Endothelial cell of umbilical vein (primary cell): ENCODE measurements at regions of chr16 and their contacts with region 1.

Region 1: DNA sequence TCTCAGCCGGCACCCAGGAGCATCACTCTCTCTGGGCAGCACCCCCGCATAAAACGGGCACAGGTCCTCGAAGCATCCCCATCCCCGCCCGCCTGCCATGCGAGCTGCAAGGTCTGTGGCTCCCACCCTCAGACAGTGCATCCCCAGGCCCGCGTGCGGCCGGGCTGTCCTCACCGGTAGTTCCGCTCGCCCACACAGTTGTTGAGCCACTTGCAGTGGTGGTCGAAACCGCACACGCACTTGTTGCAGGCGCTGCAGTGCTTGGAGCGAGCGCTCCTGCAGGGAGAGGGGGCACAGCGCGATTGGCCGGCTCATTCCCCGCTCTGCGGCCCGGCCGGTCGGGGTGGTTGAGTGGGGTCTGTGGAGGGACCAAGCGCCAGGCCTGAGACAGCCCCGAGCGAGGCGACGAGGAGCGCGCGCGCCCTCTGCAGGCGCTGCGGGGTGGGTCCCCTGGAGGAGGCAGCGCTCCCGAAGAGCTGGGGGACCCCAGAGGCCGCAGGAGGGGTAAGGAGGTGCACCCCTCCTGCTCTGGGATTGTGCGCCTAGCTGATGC is 6.0 kb upstream of the TPPP3 start:
- DNase-seq: peak; percentile 47
- H3K4me3 ChIP-seq: no peak overlapping the region
- H3K27ac ChIP-seq: no peak overlapping the region
- H3K4me1 ChIP-seq: peaks cover 1% of the 10 kb centered on the region
- H3K27me3 ChIP-seq: peaks cover 5 to 6% of the 10 kb centered on the region in 2 experiments
- CTCF ChIP-seq: peak; percentile 88 to 96
- POLR2A ChIP-seq: no peak

Region 2: GRCh38 chr16:66844342-66845079 is 554.7 kb before region 1 on chr16 and contains the start of gene CA7:
- CTCF ChIA-PET with region 1: no interaction called
- POLR2A ChIA-PET with region 1: no interaction called
- dilution Hi-C with region 1: no loop called
- intact Hi-C with region 1: no loop called
- DNase-seq: no peak
- H3K4me3 ChIP-seq: peak within 1 kb of the TSS in 1 of 3 experiments; percentile 1
- H3K27ac ChIP-seq: no peak within 1 kb of the TSS
- H3K4me1 ChIP-seq: peaks cover 2% of the 10 kb centered on the region
- H3K27me3 ChIP-seq: peaks cover 46 to 50% of the 10 kb centered on the region in 2 experiments
- CTCF ChIP-seq: no peak
- POLR2A ChIP-seq: no peak
- total RNA-seq, gene CA7: not detected in 2 replicates

Region 3: DNA sequence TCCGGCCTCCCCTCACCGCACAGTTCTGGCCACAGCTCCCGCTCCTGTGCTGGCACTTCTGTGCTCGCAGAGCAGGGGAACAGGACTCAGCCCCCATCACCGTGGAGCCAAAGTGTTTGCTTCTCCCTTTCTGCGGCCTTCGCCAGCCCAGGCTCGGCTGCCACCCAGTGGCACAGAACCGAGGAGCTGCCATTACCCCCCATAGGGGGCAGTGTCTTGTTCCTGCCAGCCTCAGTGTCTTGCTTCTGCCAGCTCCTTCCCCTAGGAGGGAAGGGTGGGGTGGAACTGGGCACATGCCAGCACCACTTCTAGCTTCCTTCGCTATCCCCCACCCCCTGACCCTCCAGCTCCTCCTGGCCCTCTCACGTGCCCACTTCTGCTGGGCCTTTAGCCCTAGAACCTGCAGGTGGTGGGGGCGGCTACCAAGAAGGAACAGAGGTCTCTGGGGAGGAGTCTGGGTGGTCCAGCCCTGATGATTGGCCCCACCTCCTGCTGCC is 201.0 kb before region 1 on chr16:
- CTCF ChIA-PET with region 1: interaction called, 10 read pairs
- POLR2A ChIA-PET with region 1: no interaction called
- dilution Hi-C with region 1: no loop called
- intact Hi-C with region 1: loop called (anchors 10 kb)
- DNase-seq: peak; percentile 63
- H3K4me3 ChIP-seq: no peak overlapping the region
- H3K27ac ChIP-seq: no peak overlapping the region
- H3K4me1 ChIP-seq: peaks cover 12% of the 10 kb centered on the region
- H3K27me3 ChIP-seq: no peaks in the 10 kb centered on the region
- CTCF ChIP-seq: peak; percentile 92 to 96
- POLR2A ChIP-seq: no peak

Region 4: GRCh38 chr16:67279296-67280089 is 119.8 kb before region 1 on chr16 and contains the start of gene PLEKHG4:
- CTCF ChIA-PET with region 1: interaction called, 26 read pairs
- POLR2A ChIA-PET with region 1: no interaction called
- dilution Hi-C with region 1: no loop called
- intact Hi-C with region 1: no loop called
- DNase-seq: peak; percentile 71
- H3K4me3 ChIP-seq: peak within 1 kb of the TSS; percentile 16 to 60 (median 51)
- H3K27ac ChIP-seq: peak within 1 kb of the TSS; percentile 78
- H3K4me1 ChIP-seq: peaks cover 21% of the 10 kb centered on the region
- H3K27me3 ChIP-seq: no peaks in the 10 kb centered on the region
- CTCF ChIP-seq: peak; percentile 73
- POLR2A ChIP-seq: no peak
- total RNA-seq, gene PLEKHG4: 23.9 and 26.6 TPM in 2 replicates

Region 5: DNA sequence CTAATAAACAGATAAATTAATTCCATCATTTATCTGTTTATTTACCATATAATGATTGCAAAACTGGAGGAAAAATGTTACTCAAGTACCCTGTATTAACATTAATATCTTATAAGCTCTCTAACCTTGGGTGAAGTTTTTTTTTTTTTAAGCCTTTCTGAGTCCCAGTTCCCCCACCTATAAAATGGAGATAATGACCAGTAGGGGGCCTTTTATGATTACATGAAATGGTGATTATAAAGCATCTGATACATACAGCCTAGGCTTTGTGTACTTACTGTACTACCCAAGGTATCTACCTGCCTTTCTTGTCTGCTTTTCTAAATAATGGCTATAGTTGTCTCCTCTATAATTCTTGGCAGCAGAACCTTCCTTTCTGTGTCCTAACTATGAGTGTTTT is 50.1 kb before region 1 on chr16:
- CTCF ChIA-PET with region 1: interaction called, 22 read pairs
- POLR2A ChIA-PET with region 1: no interaction called
- dilution Hi-C with region 1: no loop called
- intact Hi-C with region 1: no loop called
- DNase-seq: peak; percentile 59
- H3K4me3 ChIP-seq: no peak overlapping the region
- H3K27ac ChIP-seq: no peak overlapping the region
- H3K4me1 ChIP-seq: peaks cover 23% of the 10 kb centered on the region
- H3K27me3 ChIP-seq: no peaks in the 10 kb centered on the region
- CTCF ChIP-seq: peak; percentile 32 to 49
- POLR2A ChIP-seq: no peak

Region 6: DNA sequence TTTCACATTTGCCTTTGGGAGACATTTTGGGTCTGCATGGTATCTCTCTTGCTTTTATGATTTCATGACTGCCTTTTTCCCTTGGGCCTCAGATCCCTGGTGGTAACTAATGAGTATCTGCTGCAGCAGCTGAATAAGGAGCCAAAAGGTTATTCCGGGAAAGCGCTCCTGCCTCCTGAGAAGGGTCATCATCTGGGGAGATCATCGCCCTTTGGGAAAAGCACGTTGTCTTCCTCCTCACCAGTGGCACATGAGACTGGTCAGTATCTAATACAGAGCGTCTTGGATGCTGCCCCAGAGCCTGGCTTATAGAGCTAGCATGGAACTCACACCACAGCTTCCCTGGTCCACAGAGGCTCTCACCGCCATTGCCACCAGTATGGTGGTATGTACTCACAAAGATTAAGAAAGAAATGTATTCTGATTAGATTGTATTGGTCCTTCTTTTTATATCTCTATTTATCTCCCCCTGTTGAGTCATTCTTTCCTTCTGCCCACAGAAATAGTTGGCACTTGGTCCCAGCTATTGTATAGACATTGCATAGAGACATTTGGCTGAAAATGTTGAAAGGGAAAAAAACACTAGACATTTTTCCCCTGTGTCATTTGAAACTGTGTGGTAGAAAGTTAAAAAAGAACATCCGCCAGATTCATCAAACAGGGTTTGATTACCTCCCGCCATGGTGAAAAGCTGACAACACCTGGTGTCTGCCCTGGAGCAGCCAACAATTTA is 14.3 kb before region 1 on chr16:
- CTCF ChIA-PET with region 1: interaction called, 33 read pairs
- POLR2A ChIA-PET with region 1: no interaction called
- dilution Hi-C with region 1: no loop called
- intact Hi-C with region 1: no loop called
- DNase-seq: peak; percentile 85
- H3K4me3 ChIP-seq: no peak overlapping the region
- H3K27ac ChIP-seq: peak overlapping the region; percentile 13
- H3K4me1 ChIP-seq: peaks cover 13% of the 10 kb centered on the region
- H3K27me3 ChIP-seq: no peaks in the 10 kb centered on the region
- CTCF ChIP-seq: no peak
- POLR2A ChIP-seq: no peak

Region 7: GRCh38 chr16:67800338-67800926 is 401.2 kb after region 1 on chr16:
- CTCF ChIA-PET with region 1: no interaction called
- POLR2A ChIA-PET with region 1: no interaction called
- dilution Hi-C with region 1: no loop called
- intact Hi-C with region 1: no loop called
- DNase-seq: no peak
- H3K4me3 ChIP-seq: no peak overlapping the region
- H3K27ac ChIP-seq: no peak overlapping the region
- H3K4me1 ChIP-seq: peaks cover 8% of the 10 kb centered on the region
- H3K27me3 ChIP-seq: no peaks in the 10 kb centered on the region
- CTCF ChIP-seq: no peak
- POLR2A ChIP-seq: no peak